T-cell (primary cell): ENCODE measurements at regions of chr7 and their contacts with region 1.

Region 1: GRCh38 chr7:143287935-143288826 is at the start of gene CASP2:
- DNase-seq: peak; percentile 96 to 100 (median 98)
- ATAC-seq: peak; percentile 93 to 96 (median 93)
- H3K4me3 ChIP-seq: peak within 1 kb of the TSS; percentile 82 to 96
- H3K4me3 Mint-ChIP-seq: peak within 1 kb of the TSS; percentile 96 to 97 (median 97)
- H3K27ac ChIP-seq: peak within 1 kb of the TSS; percentile 81
- H3K27ac Mint-ChIP-seq: peak within 1 kb of the TSS; percentile 93 to 94
- H3K4me1 ChIP-seq: peaks cover 13 to 37% of the 10 kb centered on the region in 2 experiments
- H3K4me1 Mint-ChIP-seq: peaks cover 55 to 66% (median 58%) of the 10 kb centered on the region in 3 donors
- H3K27me3 ChIP-seq: no peaks in the 10 kb centered on the region
- H3K27me3 Mint-ChIP-seq: no peaks in the 10 kb centered on the region
- total RNA-seq, gene CASP2: 43.4 to 83.6 (median 73.7) TPM

Region 2: DNA sequence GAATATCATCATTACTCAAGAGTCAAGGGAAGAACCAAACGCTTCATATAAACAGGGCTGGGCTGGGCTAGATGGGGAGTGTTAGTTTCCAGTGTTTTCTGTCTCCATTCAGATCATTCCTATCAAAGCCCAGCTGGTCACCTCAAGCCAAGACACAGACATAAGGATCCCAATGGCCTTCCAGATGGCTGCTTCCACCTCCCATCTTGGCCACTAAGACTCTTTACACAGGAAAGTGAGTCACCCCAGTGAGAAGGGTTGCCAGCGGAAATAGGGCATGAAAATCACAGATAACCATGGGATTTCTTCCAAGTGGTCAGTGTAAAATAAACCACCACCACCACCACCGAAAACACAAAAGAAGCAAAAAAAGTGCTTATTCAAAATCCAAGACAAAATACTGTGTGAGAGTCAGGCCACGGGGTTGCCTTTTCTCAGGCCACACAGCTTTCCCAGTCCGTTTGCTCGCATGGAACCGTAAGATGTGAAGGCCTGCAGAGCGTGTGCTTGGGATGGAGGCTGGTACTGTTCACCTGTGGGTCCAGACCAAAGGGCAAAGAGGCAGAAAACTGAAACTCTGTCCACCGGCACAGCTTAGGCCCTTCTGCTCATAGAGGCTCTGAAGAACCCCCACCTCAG is 511.9 kb before region 1 on chr7:
- CTCF ChIA-PET with region 1: no interaction called
- POLR2A ChIA-PET with region 1: no interaction called
- DNase-seq: no peak
- ATAC-seq: no peak
- H3K4me3 ChIP-seq: no peak overlapping the region
- H3K4me3 Mint-ChIP-seq: no peak overlapping the region
- H3K27ac ChIP-seq: no peak overlapping the region
- H3K27ac Mint-ChIP-seq: no peak overlapping the region
- H3K4me1 ChIP-seq: no peaks in the 10 kb centered on the region
- H3K4me1 Mint-ChIP-seq: peaks cover 0 to 9% (median 0%) of the 10 kb centered on the region in 3 donors
- H3K27me3 ChIP-seq: no peaks in the 10 kb centered on the region
- H3K27me3 Mint-ChIP-seq: no peaks in the 10 kb centered on the region

Region 3: DNA sequence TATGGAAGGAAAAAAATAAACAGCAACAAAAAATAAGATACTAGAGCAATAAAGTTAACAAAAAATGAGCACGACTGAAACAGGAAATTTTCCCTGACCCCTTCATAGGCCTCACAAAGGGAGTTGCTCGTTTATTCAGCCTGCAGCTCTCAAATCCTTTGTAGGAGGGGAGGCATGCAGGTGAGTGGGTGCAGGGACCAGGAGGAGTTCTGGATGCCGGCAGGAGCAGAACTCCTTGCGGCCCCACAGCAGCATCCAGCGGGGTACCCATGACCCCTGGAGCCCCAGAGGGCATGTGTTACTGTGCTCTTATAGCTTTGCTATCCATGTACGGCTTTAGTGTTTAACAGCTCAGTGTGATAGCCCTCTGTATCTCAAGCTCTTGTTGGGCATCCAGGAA is 99.2 kb before region 1 on chr7:
- CTCF ChIA-PET with region 1: no interaction called
- POLR2A ChIA-PET with region 1: no interaction called
- DNase-seq: no peak
- ATAC-seq: no peak
- H3K4me3 ChIP-seq: no peak overlapping the region
- H3K4me3 Mint-ChIP-seq: no peak overlapping the region
- H3K27ac ChIP-seq: no peak overlapping the region
- H3K27ac Mint-ChIP-seq: no peak overlapping the region
- H3K4me1 ChIP-seq: no peaks in the 10 kb centered on the region
- H3K4me1 Mint-ChIP-seq: no peaks in the 10 kb centered on the region
- H3K27me3 ChIP-seq: no peaks in the 10 kb centered on the region
- H3K27me3 Mint-ChIP-seq: peaks cover 12 to 15% of the 10 kb centered on the region in 2 donors

Region 4: GRCh38 chr7:143299840-143300239 is 11.7 kb after region 1 on chr7:
- CTCF ChIA-PET with region 1: interaction called, 7 to 20 read pairs
- POLR2A ChIA-PET with region 1: no interaction called
- DNase-seq: peak; percentile 29 to 78 (median 62)
- ATAC-seq: peak; percentile 94 to 99 (median 98)
- H3K4me3 ChIP-seq: no peak overlapping the region
- H3K4me3 Mint-ChIP-seq: no peak overlapping the region
- H3K27ac ChIP-seq: no peak overlapping the region
- H3K27ac Mint-ChIP-seq: peak overlapping the region; percentile 77 to 79
- H3K4me1 ChIP-seq: peaks cover 10% of the 10 kb centered on the region in 2 experiments
- H3K4me1 Mint-ChIP-seq: peaks cover 42 to 45% (median 45%) of the 10 kb centered on the region in 3 donors
- H3K27me3 ChIP-seq: no peaks in the 10 kb centered on the region
- H3K27me3 Mint-ChIP-seq: no peaks in the 10 kb centered on the region

Region 5: DNA sequence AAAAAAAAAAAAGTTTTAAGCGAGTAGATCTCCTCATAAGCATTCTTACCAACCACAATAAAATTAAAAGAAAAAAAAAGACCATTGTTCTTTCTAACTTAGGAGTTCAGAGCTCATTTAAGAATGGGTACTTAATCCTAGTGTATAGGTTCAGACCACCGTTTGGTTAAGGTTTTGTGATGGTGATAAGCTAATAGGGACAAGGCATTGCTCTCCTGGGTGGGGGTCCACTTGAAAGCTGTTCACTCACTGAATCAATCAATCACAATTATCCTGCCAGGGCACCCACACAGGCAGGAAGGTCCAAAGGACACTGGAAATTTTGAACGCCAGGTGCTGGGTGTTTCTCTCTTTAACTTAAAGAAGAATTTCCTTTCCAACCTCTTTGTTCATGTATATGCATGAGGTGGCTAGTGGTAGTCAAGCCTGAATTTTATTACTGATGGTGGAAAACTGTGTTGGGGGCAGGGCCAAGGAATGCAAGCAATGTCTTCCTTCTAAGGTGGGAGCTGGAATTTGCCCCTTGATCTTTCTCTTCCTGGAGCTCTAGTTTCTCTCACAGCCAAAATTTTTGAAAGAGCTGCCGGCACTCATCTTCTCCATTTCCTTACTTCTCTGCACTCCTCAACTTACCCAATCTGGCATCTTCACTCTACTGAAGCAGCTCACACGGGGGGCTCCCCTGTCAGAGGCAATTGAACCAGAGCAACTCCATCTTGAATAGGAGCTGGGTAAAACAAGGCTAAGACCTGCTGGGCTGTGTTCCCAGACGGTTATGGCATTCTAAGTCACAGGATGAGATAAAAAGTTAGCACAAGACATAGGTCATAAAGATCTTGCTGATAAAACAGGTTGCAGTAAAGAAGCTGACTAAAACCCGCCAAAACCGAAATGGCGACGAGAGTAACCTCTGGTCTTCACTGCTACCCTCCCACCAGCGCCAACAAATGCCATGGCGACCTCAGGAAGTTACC is 81.8 kb after region 1 on chr7:
- CTCF ChIA-PET with region 1: interaction called in 1 of 2 experiments, 3 read pairs
- POLR2A ChIA-PET with region 1: interaction called in 1 of 2 experiments, 15 read pairs
- DNase-seq: no peak
- ATAC-seq: no peak
- H3K4me3 ChIP-seq: no peak overlapping the region
- H3K4me3 Mint-ChIP-seq: no peak overlapping the region
- H3K27ac ChIP-seq: no peak overlapping the region
- H3K27ac Mint-ChIP-seq: peak overlapping the region in 1 of 2 donors; percentile 17
- H3K4me1 ChIP-seq: peaks cover 13 to 24% of the 10 kb centered on the region in 2 experiments
- H3K4me1 Mint-ChIP-seq: peaks cover 31 to 39% (median 36%) of the 10 kb centered on the region in 3 donors
- H3K27me3 ChIP-seq: peaks cover 0 to 15% of the 10 kb centered on the region in 2 experiments
- H3K27me3 Mint-ChIP-seq: peaks cover 6 to 11% of the 10 kb centered on the region in 2 donors